CD4-positive, alpha-beta T cell (primary cell): ENCODE measurements at regions of chr11 and their contacts with region 1.

Region 1: DNA sequence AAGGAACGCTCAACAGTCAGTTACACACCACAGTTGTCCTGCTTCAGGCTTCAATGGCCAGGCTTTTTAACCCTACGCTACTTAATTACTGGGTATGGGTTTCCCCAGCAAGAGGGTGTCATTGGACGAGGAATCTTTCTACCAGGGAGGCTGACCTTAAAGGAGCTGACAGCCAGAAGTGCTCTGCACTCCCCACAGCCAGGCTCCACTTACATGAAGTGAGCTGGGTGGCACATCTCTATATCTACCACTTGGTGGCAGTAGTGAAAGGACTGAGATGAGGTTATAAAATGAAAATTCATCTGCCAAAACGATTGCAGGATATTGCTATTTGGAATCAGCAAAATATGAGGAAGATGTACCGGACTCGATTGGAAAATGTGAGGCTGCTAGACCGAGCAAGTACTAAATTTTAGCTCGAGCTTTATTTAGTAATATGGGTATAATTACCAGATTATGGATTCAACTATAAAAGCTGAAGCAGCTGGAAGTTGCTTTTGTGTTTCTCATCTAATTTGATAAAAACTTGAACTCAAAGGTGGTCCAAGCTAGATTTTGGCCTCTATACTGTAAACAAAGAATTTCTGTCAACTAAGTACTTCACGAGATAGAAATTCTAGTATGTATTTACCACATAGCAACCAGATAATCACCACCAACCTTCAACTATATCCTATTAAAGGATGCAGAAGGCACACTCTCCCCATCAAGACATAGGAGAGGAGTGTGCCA is 53.9 kb upstream of the CEP126 start:
- DNase-seq: peak in 10 of 14 experiments; percentile 0 to 52 (median 14)
- ATAC-seq: peak; percentile 48
- H3K4me3 ChIP-seq: no peak overlapping the region
- H3K4me3 Mint-ChIP-seq: no peak overlapping the region
- H3K27ac ChIP-seq: no peak overlapping the region
- H3K27ac Mint-ChIP-seq: no peak overlapping the region
- H3K4me1 ChIP-seq: no peaks in the 10 kb centered on the region
- H3K4me1 Mint-ChIP-seq: no peaks in the 10 kb centered on the region
- H3K27me3 ChIP-seq: peaks cover 0 to 8% of the 10 kb centered on the region in 2 experiments
- H3K27me3 Mint-ChIP-seq: peaks cover 21% of the 10 kb centered on the region
- CTCF ChIP-seq: peak; percentile 72

Region 2: DNA sequence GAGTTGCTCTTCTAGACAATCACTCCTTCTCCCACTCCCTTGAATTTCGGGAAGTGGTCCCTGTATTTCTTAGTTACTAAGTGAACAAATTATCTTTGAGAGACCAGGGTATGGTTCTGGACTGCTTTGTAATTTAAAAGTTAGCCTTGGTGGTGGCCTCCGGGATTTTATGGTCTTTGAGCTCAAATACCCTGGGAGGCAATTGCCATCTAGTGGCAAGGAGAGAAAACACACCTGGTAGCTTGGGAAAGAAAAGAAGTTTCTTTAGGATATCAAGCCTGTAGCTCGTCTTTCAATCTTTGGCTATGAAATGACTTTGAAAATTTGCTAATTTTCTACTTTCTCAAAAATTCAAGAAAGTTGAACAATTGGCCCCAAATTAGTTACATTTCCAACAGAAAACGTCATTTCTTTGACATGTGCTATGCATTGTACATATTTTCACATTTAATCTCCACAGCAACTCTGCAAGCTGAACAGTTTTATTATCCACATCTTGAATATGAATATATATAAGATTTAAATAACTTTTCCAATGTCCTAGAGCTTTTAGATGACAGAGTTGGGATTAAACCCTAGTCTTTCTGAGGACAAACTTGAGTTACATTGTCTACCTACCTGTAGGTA is 805.6 kb after region 1 on chr11:
- CTCF ChIA-PET with region 1: no interaction called
- POLR2A ChIA-PET with region 1: no interaction called
- intact Hi-C with region 1: loop called in 1 of 2 experiments (anchors 5 kb)
- DNase-seq: peak in 5 of 14 experiments; percentile 2 to 57 (median 45)
- ATAC-seq: peak; percentile 55
- H3K4me3 ChIP-seq: no peak overlapping the region
- H3K4me3 Mint-ChIP-seq: no peak overlapping the region
- H3K27ac ChIP-seq: no peak overlapping the region
- H3K27ac Mint-ChIP-seq: no peak overlapping the region
- H3K4me1 ChIP-seq: no peaks in the 10 kb centered on the region
- H3K4me1 Mint-ChIP-seq: no peaks in the 10 kb centered on the region
- H3K27me3 ChIP-seq: no peaks in the 10 kb centered on the region
- H3K27me3 Mint-ChIP-seq: peaks cover 9% of the 10 kb centered on the region
- CTCF ChIP-seq: peak; percentile 86